ENCODE measurements at regions of chr1 and their contacts with region 1.

Region 1: DNA sequence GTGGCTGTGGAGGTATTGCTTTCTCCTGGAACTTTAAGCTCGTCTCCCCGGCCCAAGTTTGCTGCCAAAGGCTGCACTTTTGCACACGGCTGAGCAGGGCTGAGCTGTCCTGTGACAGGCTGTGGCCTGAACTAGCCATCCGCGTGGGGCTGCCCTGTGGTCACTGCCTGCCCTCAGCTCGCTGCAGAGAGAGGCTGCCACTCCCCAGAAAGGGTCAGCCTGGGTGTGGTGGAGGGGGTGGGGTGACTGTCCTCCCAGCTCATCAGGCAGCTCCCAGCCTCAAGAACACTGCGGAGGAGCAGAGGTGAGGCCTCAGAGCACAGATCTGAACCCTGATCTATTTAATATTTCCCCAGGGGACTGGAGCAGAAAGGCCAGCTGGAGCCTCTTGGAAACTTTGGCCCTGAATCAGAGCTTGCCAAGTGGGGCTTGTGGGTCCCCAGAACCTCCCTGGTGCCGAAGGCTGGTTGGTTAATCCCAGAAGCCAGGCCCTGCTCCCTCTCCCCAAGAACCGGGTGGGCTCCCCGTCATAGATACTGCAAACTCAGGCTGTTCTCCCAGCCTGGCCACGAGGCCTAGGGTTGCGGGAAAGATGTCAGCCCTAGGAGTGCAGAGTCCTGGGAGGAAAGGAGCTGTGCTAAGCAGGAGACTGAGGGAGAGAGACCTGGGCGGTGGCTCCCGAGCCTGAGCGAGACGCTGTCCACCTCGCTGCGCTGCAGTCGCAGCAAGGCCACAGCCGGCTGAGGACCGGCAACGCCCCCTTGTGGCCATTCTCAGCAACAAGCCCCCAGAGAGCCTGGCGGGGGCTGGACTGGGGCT is 125.1 kb upstream of the IPO9 start:
- DNase-seq: peak; percentile 71 to 86 (median 81)
- H3K4me3 ChIP-seq: no peak overlapping the region
- H3K27ac ChIP-seq: no peak overlapping the region
- H3K4me1 ChIP-seq: peaks cover 0 to 10% (median 4%) of the 10 kb centered on the region in 4 experiments
- H3K27me3 ChIP-seq: no peaks in the 10 kb centered on the region

Region 2: GRCh38 chr1:201348211-201348566 is 355.6 kb before region 1 on chr1:
- CTCF ChIA-PET with region 1: no interaction called
- POLR2A ChIA-PET with region 1: no interaction called
- DNase-seq: peak; percentile 40 to 64 (median 50)
- H3K4me3 ChIP-seq: no peak overlapping the region
- H3K27ac ChIP-seq: no peak overlapping the region
- H3K4me1 ChIP-seq: no peaks in the 10 kb centered on the region
- H3K27me3 ChIP-seq: peaks cover 0 to 19% (median 7%) of the 10 kb centered on the region in 5 experiments

Region 3: GRCh38 chr1:201530741-201531531 is 172.9 kb before region 1 on chr1:
- CTCF ChIA-PET with region 1: interaction called, 53 read pairs
- POLR2A ChIA-PET with region 1: interaction called, 4 read pairs
- DNase-seq: peak; percentile 77 to 83 (median 79)
- H3K4me3 ChIP-seq: peak overlapping the region in 1 of 7 experiments; percentile 14
- H3K27ac ChIP-seq: no peak overlapping the region
- H3K4me1 ChIP-seq: peaks cover 0 to 38% (median 29%) of the 10 kb centered on the region in 4 experiments
- H3K27me3 ChIP-seq: no peaks in the 10 kb centered on the region

Region 4: GRCh38 chr1:202291961-202292712 is 588.3 kb after region 1 on chr1:
- CTCF ChIA-PET with region 1: no interaction called
- POLR2A ChIA-PET with region 1: no interaction called
- DNase-seq: no peak
- H3K4me3 ChIP-seq: no peak overlapping the region
- H3K27ac ChIP-seq: no peak overlapping the region
- H3K4me1 ChIP-seq: peaks cover 0 to 6% (median 2%) of the 10 kb centered on the region in 4 experiments
- H3K27me3 ChIP-seq: peaks cover 3 to 43% (median 17%) of the 10 kb centered on the region in 5 experiments

Measured in common myeloid progenitor, CD34-positive (primary cell).